AG04450 (cell line): ENCODE measurements at regions of chr22 and their contacts with region 1.

Region 1: GRCh38 chr22:37953437-37954179 is at the starts of genes C22orf23 and POLR2F:
- DNase-seq: peak; percentile 88
- H3K4me3 ChIP-seq: peak within 1 kb of the TSS; percentile 100
- H3K27ac ChIP-seq: peak within 1 kb of the TSS; percentile 52
- H3K27me3 ChIP-seq: no peaks in the 10 kb centered on the region
- CTCF ChIP-seq: no peak
- polyA plus RNA-seq, gene C22orf23: 0.45 and 0.55 TPM in 2 replicates
- polyA plus RNA-seq, gene POLR2F: 87.4 and 89.8 TPM in 2 replicates

Region 2: DNA sequence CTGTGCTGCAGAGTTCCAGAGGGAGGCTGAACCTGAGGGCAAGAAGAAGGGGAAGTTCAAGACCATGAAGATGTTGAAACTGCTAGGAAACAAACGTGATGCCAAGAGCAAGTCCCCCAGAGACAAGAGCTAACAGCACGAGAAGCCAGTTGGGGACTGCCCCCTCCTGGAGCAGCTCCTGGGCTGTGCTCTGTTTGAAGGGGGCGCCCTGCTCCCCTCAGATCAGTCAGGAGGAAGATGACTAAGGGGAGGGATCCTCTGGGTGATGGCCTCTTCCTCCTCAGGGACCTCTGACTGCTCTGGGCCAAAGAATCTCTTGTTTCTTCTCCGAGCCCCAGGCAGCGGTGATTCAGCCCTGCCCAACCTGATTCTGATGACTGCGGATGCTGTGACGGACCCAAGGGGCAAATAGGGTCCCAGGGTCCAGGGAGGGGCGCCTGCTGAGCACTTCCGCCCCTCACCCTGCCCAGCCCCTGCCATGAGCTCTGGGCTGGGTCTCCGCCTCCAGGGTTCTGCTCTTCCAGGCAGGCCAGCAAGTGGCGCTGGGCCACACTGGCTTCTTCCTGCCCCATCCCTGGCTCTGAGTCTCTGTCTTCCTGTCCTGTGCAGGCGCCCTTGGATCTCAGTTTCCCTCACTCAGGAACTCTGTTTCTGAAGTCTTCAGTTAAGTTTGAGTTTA is 12.8 kb before region 1 on chr22:
- CTCF ChIA-PET with region 1: interaction called, 4 read pairs
- POLR2A ChIA-PET with region 1: interaction called, 12 read pairs
- DNase-seq: no peak
- H3K4me3 ChIP-seq: no peak overlapping the region
- H3K27ac ChIP-seq: no peak overlapping the region
- H3K27me3 ChIP-seq: no peaks in the 10 kb centered on the region
- CTCF ChIP-seq: no peak

Region 3: DNA sequence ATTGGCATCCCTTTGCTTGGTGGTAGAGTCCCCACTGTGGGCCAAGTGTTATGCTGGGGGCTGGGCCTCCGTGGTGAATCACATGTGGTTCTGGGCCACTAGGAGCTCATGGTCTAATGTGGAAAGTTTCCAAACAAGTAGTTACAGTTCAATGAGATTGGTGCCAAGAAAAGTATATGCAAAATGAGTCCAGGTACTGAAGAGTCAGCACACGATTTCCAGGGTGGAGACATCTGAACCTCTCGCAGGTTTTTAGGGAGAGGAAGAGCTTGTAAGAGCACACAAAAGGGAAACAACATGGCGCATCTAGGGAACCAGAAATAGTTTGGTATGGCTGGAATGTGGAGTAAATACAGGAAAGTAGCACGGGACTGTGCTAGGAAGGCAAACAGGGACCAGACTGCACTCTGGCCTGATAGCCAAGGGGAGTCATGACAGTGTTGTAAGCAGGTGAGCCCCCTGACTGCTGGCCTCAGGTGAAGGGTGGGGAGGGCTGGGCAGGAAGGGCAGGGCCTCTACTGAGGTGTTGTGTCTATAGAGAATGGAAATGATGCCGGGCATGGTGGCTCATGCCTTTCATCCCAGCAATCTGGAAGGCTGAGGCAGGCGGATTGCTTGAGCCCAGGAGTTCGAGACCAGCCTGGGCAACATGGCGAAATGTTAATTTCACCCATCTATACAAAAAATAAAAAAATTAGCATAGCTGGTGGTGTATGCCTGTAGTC is 12.5 kb after region 1 on chr22:
- CTCF ChIA-PET with region 1: interaction called, 24 read pairs
- POLR2A ChIA-PET with region 1: no interaction called
- DNase-seq: no peak
- H3K4me3 ChIP-seq: no peak overlapping the region
- H3K27ac ChIP-seq: no peak overlapping the region
- H3K27me3 ChIP-seq: no peaks in the 10 kb centered on the region
- CTCF ChIP-seq: no peak